Adrenal gland (tissue), 19 donors: ENCODE measurements at regions of chr9 and their contacts with region 1.

Region 1: DNA sequence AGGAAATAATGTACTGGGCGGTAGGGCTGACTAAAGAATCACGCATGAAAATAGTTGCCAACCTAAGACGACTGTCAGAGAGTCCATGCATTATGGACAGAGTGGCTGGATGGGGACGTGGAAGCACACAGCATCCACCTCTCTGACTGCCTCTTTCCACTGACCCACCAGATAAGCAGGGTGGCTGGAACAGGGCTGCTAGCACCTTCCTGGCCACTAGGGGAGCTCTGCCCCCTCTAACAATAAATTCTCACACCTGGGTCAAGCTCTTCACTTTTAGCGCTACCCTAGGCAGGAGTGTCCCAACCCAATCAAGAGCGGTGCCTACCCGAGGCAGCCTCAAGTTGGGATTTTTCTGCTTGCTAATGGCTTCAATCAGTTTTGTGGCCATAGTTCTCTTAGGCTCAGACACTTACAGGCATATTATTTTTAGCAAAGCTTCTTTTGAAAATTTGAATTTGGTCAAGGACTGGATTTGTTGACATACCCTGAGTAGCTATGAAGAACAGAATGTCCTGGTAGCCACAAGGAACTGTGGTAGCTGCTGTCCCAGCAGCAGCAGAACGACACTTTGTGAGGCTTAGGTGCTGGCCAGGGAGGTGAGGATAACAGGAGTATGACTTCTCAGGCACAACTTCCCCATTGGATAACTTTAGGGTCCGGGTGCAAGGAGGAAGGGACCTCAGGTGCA is 6.9 kb upstream of the TPM2 start:
- DNase-seq: peak; percentile 64 to 85 (median 71)
- H3K4me3 ChIP-seq: no peak overlapping the region
- H3K27ac ChIP-seq: peak overlapping the region in 3 of 5 donors; percentile 17 to 74 (median 74)
- H3K4me1 ChIP-seq: peaks cover 19 to 45% of the 10 kb centered on the region in 2 donors
- H3K27me3 ChIP-seq: no peaks in the 10 kb centered on the region
- CTCF ChIP-seq: peak; percentile 72 to 85 (median 84)
- POLR2A ChIP-seq: no peak

Region 2: GRCh38 chr9:35664531-35665470 is 31.9 kb before region 1 on chr9 and contains the start of gene ARHGEF39:
- intact Hi-C with region 1: loop called in 1 of 2 experiments (anchors 5 kb)
- DNase-seq: peak; percentile 79 to 91 (median 84)
- H3K4me3 ChIP-seq: peak within 1 kb of the TSS in 2 of 4 donors; percentile 47 to 64
- H3K27ac ChIP-seq: peak within 1 kb of the TSS in 3 of 5 donors; percentile 20 to 46 (median 44)
- H3K4me1 ChIP-seq: peaks cover 12 to 30% of the 10 kb centered on the region in 2 donors
- H3K27me3 ChIP-seq: no peaks in the 10 kb centered on the region
- CTCF ChIP-seq: peak in 2 of 6 experiments; percentile 4 to 19
- POLR2A ChIP-seq: peak; percentile 35 to 36
- total RNA-seq, gene ARHGEF39: 0.42 to 18.4 (median 0.96) TPM

Region 3: GRCh38 chr9:35891646-35892045 is 195.0 kb after region 1 on chr9:
- intact Hi-C with region 1: no loop called
- DNase-seq: no peak
- H3K4me3 ChIP-seq: no peak overlapping the region
- H3K27ac ChIP-seq: no peak overlapping the region
- H3K4me1 ChIP-seq: no peaks in the 10 kb centered on the region
- H3K27me3 ChIP-seq: peaks cover 11% of the 10 kb centered on the region
- CTCF ChIP-seq: no peak
- POLR2A ChIP-seq: no peak